ENCODE measurements at regions of chr3 and their contacts with region 1.

Region 1: DNA sequence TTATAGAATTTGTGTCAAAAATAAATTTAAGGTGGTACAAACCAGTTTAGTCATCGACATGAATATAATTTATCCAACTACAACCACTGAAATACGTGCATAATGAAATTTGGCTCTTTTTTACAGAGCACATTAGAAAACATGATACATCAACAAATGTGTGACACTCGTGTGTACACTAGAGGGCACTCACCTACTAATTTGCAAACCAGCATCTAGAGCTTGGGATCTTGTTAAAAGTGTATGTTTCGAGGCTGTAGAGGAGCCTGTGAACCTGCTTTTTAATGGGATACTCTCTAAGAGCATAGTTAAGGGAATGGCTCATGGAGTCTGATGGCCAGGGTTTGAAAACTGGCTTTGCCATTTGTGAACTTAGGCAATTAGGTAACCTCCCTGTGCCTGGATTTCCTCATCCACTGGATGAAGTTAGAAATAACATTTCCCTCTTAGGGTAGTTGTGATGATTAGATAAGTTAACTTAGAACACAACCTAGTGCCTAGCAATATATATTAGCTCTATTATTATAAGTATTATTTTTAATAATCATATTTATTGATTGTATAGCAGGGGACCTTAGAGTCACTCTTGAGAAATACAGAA is 8.8 kb upstream of the CPOX start:
- DNase-seq: peak; percentile 44
- H3K4me3 ChIP-seq: no peak overlapping the region
- CTCF ChIP-seq: peak; percentile 76

Region 2: DNA sequence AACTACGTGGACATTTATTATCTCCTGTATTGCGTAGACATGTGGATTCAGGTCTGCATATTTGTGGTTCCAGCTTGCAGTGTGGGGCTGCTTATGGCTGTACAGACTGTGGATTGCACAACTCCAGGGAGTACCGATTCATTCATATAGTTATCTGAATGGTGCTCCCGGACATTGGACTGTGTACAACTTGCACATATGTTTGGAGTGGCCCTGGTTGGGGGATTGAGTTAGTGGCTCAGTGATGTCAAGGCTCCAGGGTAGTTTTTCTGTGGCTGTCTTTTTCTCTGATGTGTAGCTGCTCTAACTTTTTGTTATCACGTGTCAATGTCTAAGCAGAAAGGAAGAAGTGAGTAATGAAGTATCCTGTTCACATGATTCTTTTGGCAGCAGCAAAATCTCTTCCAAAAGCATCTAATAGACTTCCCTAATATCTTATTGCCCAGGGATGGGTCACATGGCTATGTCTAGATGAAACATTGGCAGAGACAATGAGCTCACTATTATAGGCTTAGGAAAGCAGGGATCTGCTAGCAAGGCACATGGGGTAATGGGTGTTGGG is 176.8 kb after region 1 on chr3:
- in situ Hi-C with region 1: loop called (anchors 25 kb)
- DNase-seq: peak; percentile 74
- H3K4me3 ChIP-seq: no peak overlapping the region
- CTCF ChIP-seq: no peak

Region 3: DNA sequence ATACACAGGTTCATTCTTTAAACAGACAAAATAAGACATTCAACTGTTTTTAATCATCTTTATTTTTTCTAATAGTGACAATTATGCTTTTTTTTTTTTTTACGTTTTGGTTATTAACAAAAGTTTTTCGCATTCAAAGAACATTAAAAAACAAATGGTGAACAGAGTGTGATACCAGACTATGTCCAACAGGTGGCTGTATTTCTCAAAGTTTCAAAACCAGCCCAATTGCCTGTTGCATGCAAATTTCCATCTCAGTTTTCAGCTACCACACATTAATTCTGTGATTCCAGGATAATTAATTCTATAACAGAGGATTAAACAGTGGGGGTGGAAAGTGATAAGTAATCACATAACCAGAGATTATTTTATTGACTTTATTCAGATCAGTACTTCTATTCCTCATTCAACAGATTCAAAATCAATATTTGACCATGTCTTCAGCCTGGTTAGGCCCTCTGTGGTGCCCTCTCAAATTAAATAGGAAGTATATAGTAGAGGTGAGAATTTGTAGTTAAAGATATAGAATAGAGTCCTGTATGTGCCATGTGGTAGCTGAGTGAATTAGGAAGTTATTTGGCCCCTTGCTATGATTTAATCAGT is 421.5 kb after region 1 on chr3:
- in situ Hi-C with region 1: loop called (anchors 25 kb)
- DNase-seq: peak; percentile 36
- H3K4me3 ChIP-seq: no peak overlapping the region
- CTCF ChIP-seq: peak; percentile 58